Left colon (tissue), 2 donors: ENCODE measurements at regions of chr3 and their contacts with region 1.

Region 1: DNA sequence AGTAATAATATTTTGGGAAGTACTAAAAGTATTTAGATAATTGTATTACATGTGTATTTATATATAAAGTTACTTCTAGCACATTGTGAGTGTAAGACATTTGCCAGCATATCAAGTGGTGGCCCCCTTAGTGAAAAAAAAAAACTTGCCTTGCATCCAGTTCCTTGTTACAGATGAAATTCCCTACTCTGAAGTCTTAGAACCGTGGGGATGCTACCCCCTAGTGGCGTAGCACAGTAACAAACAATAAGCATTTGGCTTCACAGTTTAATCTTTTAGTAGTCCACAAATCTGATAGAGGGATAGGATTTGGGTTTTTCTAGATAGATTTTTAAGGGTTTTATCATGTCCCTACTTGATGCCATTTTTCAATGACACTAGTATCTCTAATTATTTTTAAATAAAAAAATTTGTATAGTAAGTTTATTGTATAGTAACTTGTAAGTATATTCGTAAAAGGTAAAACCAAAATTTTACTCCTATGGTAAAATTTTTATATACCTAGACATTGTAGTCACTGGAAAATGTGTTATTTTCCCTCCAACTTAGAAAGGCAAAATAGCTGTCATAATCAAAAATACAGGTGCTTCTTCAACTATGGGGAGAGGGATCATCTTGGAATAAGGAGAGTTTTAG is 14.3 kb downstream of the SMC4 start:
- DNase-seq: peak; percentile 37 to 44
- ATAC-seq: peak; percentile 83

Region 2: GRCh38 chr3:160027541-160028195 is 386.1 kb before region 1 on chr3:
- intact Hi-C with region 1: loop called in 1 of 2 experiments (anchors 5 kb)
- DNase-seq: no peak
- ATAC-seq: no peak

Region 3: GRCh38 chr3:160163229-160163878 is 250.4 kb before region 1 on chr3:
- intact Hi-C with region 1: loop called in 1 of 2 experiments (anchors 5 kb)
- DNase-seq: no peak
- ATAC-seq: no peak

Region 4: GRCh38 chr3:160498202-160498601 is 84.5 kb after region 1 on chr3:
- intact Hi-C with region 1: no loop called
- DNase-seq: no peak
- ATAC-seq: no peak

Region 5: DNA sequence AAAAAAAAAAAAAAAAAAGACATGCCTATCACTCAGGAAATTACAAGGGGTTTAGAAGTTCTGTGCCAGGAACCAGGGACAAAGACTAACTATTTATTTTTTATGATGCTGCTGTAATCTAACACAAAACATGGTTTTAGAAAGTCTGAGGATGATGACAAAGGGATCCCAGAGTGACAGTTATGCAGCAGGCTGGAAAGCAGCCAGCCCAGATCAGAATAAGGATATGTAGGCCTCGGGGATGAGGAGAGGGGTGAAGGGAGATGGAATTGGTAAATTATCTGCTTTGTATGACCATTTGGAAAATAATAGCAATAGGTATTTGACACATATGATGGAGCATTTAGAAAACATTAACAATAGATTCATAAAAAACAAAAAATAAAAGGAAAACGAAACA is 773.3 kb after region 1 on chr3:
- intact Hi-C with region 1: no loop called
- DNase-seq: no peak
- ATAC-seq: no peak